Common myeloid progenitor, CD34-positive (primary cell): ENCODE measurements at regions of chr19 and their contacts with region 1.

Region 1: GRCh38 chr19:16111160-16111908 is at the start of gene RAB8A:
- DNase-seq: peak; percentile 99 to 100 (median 100)
- H3K4me3 ChIP-seq: peak within 1 kb of the TSS; percentile 72 to 99 (median 95)
- H3K27ac ChIP-seq: peak within 1 kb of the TSS; percentile 82 to 95
- H3K4me1 ChIP-seq: peaks cover 8 to 48% (median 43%) of the 10 kb centered on the region in 4 experiments
- H3K27me3 ChIP-seq: no peaks in the 10 kb centered on the region

Region 2: GRCh38 chr19:16168465-16169081 is 57.2 kb after region 1 on chr19:
- CTCF ChIA-PET with region 1: interaction called, 10 read pairs
- POLR2A ChIA-PET with region 1: no interaction called
- DNase-seq: peak; percentile 75 to 97 (median 94)
- H3K4me3 ChIP-seq: peak overlapping the region in 1 of 7 experiments; percentile 0
- H3K27ac ChIP-seq: peak overlapping the region in 1 of 2 experiments; percentile 52
- H3K4me1 ChIP-seq: peaks cover 0 to 46% (median 35%) of the 10 kb centered on the region in 4 experiments
- H3K27me3 ChIP-seq: no peaks in the 10 kb centered on the region